Activated naive CD8-positive, alpha-beta T cell treated with anti-CD3 and anti-CD28 coated beads, Interleukin-2, amount 10 ng/mL, durations not matched to agents 7 days and 5 days (primary cell): ENCODE measurements at regions of chr20 and their contacts with region 1.

Region 1: GRCh38 chr20:38434743-38435554 is at the start of gene SNHG17:
- DNase-seq: peak; percentile 92
- ATAC-seq: peak; percentile 82
- H3K4me3 Mint-ChIP-seq: peak within 1 kb of the TSS; percentile 93
- H3K27ac Mint-ChIP-seq: peak within 1 kb of the TSS; percentile 90
- H3K4me1 Mint-ChIP-seq: peaks cover 25% of the 10 kb centered on the region
- H3K27me3 Mint-ChIP-seq: peaks cover 8% of the 10 kb centered on the region
- total RNA-seq, gene SNHG17: 70.9 to 74.4 TPM

Region 2: GRCh38 chr20:38446441-38447209 is 11.7 kb after region 1 on chr20:
- POLR2A ChIA-PET with region 1: interaction called, 146 read pairs
- DNase-seq: peak; percentile 96
- ATAC-seq: peak; percentile 97
- H3K4me3 Mint-ChIP-seq: peak overlapping the region; percentile 75
- H3K27ac Mint-ChIP-seq: peak overlapping the region; percentile 82
- H3K4me1 Mint-ChIP-seq: peaks cover 21% of the 10 kb centered on the region
- H3K27me3 Mint-ChIP-seq: peaks cover 12% of the 10 kb centered on the region

Region 3: GRCh38 chr20:38472513-38473372 is 37.8 kb after region 1 on chr20 and contains the start of gene RALGAPB:
- POLR2A ChIA-PET with region 1: interaction called, 32 read pairs
- DNase-seq: peak; percentile 99
- ATAC-seq: peak; percentile 98
- H3K4me3 Mint-ChIP-seq: peak within 1 kb of the TSS; percentile 88
- H3K27ac Mint-ChIP-seq: peak within 1 kb of the TSS; percentile 78
- H3K4me1 Mint-ChIP-seq: peaks cover 25% of the 10 kb centered on the region
- H3K27me3 Mint-ChIP-seq: peaks cover 4% of the 10 kb centered on the region
- total RNA-seq, gene RALGAPB: 36.2 to 39.7 TPM